Panc1 (cell line): ENCODE measurements at regions of chr4 and their contacts with region 1.

Region 1: DNA sequence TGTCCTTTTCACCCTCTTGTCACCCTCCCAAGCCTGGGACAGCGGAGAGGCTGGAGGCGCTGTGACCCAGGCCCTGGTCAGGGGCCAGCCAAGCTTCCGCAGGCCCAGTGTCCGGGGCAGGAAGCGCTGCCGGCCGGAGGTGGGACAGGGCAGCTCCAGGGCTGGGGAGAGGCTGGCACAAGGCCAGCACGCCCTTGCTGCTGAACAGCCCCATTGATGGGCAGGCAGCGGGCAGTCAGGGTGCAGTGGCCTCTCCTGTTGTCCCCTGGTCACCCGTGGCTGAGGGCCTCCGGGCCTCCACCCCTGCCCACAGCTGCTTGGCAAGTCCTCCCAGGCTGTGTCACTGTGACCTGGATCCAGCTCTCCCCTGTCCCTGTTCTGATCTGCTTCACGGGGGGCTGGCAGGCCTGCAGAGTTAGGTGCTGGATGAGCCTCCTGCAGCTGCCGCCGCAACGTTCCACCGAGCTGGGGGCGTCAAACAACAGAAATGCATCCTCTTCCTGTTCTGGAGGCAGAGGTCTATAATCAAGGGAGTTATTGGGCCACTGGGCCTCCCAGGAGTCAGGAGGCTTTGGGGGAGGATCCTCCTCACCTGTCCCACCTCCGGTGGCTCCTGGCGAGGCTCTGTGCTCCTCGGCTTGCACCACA is 107.9 kb downstream of the PSAPL1 start:
- DNase-seq: no peak
- ATAC-seq: no peak
- H3K4me3 ChIP-seq: no peak overlapping the region
- H3K27ac ChIP-seq: no peak overlapping the region
- H3K4me1 ChIP-seq: peaks cover 4% of the 10 kb centered on the region; the same call in 1 of the 2 replicates
- H3K27me3 ChIP-seq: no peaks in the 10 kb centered on the region
- CTCF ChIP-seq: no peak

Region 2: DNA sequence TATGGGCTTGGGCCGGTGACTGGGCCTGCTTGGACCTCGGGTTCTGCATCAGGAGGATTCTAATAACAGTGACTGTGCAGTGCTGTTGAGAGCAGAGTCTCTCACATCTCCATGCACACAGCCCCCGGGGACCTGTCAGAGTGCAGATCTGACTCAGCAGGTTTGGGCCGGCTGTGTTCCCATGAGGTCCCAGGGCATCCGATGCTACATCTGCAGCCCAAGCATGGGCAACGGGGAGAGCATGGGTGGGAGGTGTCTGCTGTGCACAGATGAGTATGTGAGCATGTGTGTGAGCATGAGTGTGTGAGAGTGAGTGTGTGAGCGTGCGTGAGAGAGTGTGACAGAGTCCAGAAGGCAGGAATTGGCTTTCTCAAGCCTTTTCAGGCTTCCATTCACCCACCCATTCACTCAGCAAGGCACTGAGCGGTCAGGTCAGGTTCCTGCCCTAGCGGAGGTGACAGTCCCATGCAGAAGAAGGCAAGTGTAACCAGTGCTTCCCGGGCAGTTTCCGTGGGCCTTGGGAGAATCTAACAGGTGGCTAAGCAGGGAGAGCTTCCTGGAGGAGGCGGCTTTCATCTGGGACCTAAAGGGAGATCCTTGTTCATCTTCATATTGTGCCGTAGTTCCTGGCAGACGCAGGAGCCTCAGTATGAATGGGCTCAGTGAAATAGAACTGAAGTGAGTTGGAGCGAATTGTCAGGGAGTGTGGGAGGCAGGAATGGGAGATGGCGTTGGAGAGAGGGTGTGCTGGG is 71.9 kb before region 1 on chr4:
- CTCF ChIA-PET with region 1: no interaction called
- POLR2A ChIA-PET with region 1: no interaction called
- in situ Hi-C with region 1: no loop called
- intact Hi-C with region 1: no loop called
- DNase-seq: no peak
- ATAC-seq: no peak
- H3K4me3 ChIP-seq: no peak overlapping the region
- H3K27ac ChIP-seq: no peak overlapping the region
- H3K4me1 ChIP-seq: no peaks in the 10 kb centered on the region
- H3K27me3 ChIP-seq: no peaks in the 10 kb centered on the region
- CTCF ChIP-seq: no peak

Region 3: DNA sequence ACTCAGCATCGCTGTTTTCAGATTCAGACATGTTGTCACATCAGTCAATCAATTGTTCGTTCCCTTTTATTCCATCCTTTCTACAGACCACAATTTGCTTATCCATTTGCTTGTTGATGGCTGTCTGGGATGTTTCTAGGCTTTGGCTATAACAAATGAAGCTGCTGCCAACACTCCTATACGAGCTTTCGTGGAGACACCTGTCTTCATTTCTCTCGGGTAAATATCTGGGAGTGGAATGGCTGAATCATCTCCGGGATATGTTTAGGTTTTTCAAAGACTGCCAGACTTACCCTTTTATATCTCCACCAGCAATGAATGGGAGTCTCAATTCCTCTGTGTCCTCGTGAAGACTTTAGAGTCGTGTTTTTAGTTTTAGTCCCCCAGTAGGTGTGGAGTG is 15.6 kb before region 1 on chr4:
- CTCF ChIA-PET with region 1: interaction called, 12 read pairs
- POLR2A ChIA-PET with region 1: no interaction called
- in situ Hi-C with region 1: no loop called
- intact Hi-C with region 1: no loop called
- DNase-seq: no peak
- ATAC-seq: no peak
- H3K4me3 ChIP-seq: no peak overlapping the region
- H3K27ac ChIP-seq: no peak overlapping the region
- H3K4me1 ChIP-seq: no peaks in the 10 kb centered on the region
- H3K27me3 ChIP-seq: no peaks in the 10 kb centered on the region; the same call in 1 of the 2 replicates
- CTCF ChIP-seq: no peak

Region 4: GRCh38 chr4:8515316-8516062 is 1188.7 kb after region 1 on chr4:
- CTCF ChIA-PET with region 1: interaction called, 13 read pairs
- POLR2A ChIA-PET with region 1: no interaction called
- in situ Hi-C with region 1: no loop called
- intact Hi-C with region 1: no loop called
- DNase-seq: no peak
- ATAC-seq: peak; percentile 66
- H3K4me3 ChIP-seq: no peak overlapping the region
- H3K27ac ChIP-seq: no peak overlapping the region
- H3K4me1 ChIP-seq: no peaks in the 10 kb centered on the region
- H3K27me3 ChIP-seq: no peaks in the 10 kb centered on the region
- CTCF ChIP-seq: no peak